GM10248 (cell line): ENCODE measurements at regions of chr15 and their contacts with region 1.

Region 1: GRCh38 chr15:74558706-74559105 is 17.7 kb downstream of the ARID3B start:
- DNase-seq: no peak
- CTCF ChIP-seq: no peak

Region 2: DNA sequence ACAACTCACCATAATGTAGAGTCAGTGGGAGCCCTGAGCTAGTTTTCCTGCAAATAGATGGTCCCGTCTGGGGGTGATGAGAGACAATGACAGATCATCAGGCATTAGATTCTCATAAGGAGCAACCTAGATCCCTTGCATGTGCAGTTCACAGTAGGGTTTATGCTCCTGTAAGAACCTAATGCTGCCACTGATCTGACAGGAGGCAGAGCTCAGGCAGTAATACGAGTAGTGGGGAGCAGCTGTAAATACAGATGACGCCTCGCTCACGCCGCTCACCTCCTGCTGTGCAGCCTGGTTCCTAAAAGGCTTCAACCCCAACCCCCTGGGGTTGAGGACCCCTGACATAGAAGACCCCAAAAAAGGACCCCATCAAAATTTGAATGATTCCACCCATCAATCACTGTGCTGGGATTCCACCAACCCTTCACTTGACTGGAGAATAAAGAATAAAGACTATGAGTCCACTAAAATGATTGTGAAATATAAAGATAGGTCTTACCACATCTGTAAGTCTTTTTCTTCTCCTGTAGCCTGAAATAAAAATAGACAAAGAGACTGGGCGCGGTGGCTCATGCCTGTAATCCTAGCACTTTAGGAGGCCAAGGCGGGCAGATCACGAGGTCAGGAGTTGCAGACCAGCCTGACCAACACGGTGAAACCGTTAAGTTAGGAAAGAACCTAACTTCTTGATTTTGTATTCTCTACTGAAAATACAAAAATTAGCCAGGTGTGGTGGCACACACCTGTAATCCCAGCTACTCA is 87.9 kb before region 1 on chr15:
- CTCF ChIA-PET with region 1: no interaction called
- POLR2A ChIA-PET with region 1: no interaction called
- DNase-seq: no peak
- CTCF ChIP-seq: no peak

Region 3: GRCh38 chr15:74569336-74570070 is 10.8 kb after region 1 on chr15:
- CTCF ChIA-PET with region 1: interaction called, 20 read pairs
- POLR2A ChIA-PET with region 1: no interaction called
- DNase-seq: no peak
- CTCF ChIP-seq: no peak